ENCODE measurements at regions of chr7 and their contacts with region 1.

Region 1: GRCh38 chr7:87213811-87214210 is 5.7 kb downstream of the TMEM243 start:
- DNase-seq: no peak
- ATAC-seq: no peak
- H3K4me3 Mint-ChIP-seq: peak overlapping the region; percentile 59
- H3K27ac Mint-ChIP-seq: peak overlapping the region; percentile 97
- H3K4me1 Mint-ChIP-seq: peaks cover 64% of the 10 kb centered on the region
- H3K27me3 Mint-ChIP-seq: no peaks in the 10 kb centered on the region

Region 2: DNA sequence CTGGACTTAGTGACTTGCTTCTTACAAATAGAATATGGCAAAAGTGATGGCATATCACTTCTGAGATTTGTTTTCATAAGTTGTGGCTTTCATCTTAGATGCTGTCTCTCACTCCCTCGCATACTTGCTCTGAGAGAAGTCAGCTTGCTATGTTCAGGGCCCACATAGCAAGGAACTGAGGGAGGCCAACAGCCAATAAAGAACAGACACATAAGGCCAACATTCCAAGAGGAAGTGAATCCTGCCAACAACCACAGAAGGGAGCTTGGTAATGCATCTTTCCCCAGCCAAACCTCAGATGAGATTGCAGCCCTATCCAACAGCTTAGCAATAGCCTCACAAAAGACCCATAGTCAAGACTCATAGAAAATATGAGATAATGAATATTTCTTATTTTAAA is 100.7 kb before region 1 on chr7:
- POLR2A ChIA-PET with region 1: no interaction called
- DNase-seq: no peak
- ATAC-seq: no peak
- H3K4me3 Mint-ChIP-seq: no peak overlapping the region
- H3K27ac Mint-ChIP-seq: no peak overlapping the region
- H3K4me1 Mint-ChIP-seq: no peaks in the 10 kb centered on the region
- H3K27me3 Mint-ChIP-seq: peaks cover 4% of the 10 kb centered on the region

Region 3: GRCh38 chr7:87152107-87152844 is 61.5 kb before region 1 on chr7 and contains the start of gene DMTF1:
- POLR2A ChIA-PET with region 1: interaction called, 119 read pairs
- DNase-seq: peak; percentile 87
- ATAC-seq: peak; percentile 86
- H3K4me3 Mint-ChIP-seq: peak within 1 kb of the TSS; percentile 92
- H3K27ac Mint-ChIP-seq: peak within 1 kb of the TSS; percentile 92
- H3K4me1 Mint-ChIP-seq: peaks cover 29% of the 10 kb centered on the region
- H3K27me3 Mint-ChIP-seq: no peaks in the 10 kb centered on the region
- total RNA-seq, gene DMTF1: 131 to 137 TPM

Region 4: GRCh38 chr7:87354749-87355148 is 140.9 kb after region 1 on chr7:
- POLR2A ChIA-PET with region 1: no interaction called
- DNase-seq: no peak
- ATAC-seq: no peak
- H3K4me3 Mint-ChIP-seq: no peak overlapping the region
- H3K27ac Mint-ChIP-seq: no peak overlapping the region
- H3K4me1 Mint-ChIP-seq: no peaks in the 10 kb centered on the region
- H3K27me3 Mint-ChIP-seq: no peaks in the 10 kb centered on the region

Region 5: DNA sequence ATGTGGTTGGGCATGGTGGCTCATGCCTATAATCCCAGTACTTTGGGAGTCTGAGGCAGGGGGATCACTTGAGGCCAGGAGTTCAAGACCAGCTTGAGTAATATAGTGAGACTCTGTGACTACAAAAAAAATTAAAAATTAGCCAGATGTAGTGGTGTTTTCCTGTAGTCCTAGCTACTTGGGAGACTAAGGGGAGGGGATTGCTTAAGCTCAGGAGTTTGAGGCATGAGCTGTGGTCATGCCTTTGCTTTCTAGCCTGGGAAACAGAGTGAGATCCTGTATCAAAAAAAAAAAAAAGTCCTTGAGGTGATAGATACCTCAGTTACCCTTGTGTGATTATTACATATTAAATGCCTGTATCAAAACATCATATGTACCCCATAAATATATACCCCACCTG is 545.7 kb after region 1 on chr7:
- POLR2A ChIA-PET with region 1: no interaction called
- DNase-seq: no peak
- ATAC-seq: no peak
- H3K4me3 Mint-ChIP-seq: no peak overlapping the region
- H3K27ac Mint-ChIP-seq: no peak overlapping the region
- H3K4me1 Mint-ChIP-seq: no peaks in the 10 kb centered on the region
- H3K27me3 Mint-ChIP-seq: no peaks in the 10 kb centered on the region

Measured in activated naive CD8-positive, alpha-beta T cell treated with anti-CD3 and anti-CD28 coated beads, Interleukin-2, amount 10 ng/mL, durations not matched to agents 7 days and 5 days (primary cell).